Activated B cell treated with CpG ODN at 0.5 μM for 24 hours (primary cell): ENCODE measurements at regions of chr9 and their contacts with region 1.

Region 1: GRCh38 chr9:136807281-136808074 is at the start of gene RABL6:
- DNase-seq: peak; percentile 86
- ATAC-seq: peak; percentile 87
- H3K4me3 Mint-ChIP-seq: peak within 1 kb of the TSS; percentile 88
- H3K27ac Mint-ChIP-seq: peak within 1 kb of the TSS; percentile 87
- H3K4me1 Mint-ChIP-seq: peaks cover 31% of the 10 kb centered on the region
- H3K27me3 Mint-ChIP-seq: no peaks in the 10 kb centered on the region
- CTCF ChIP-seq: no peak
- total RNA-seq, gene RABL6: 70.1 and 75.0 TPM in 2 replicates

Region 2: DNA sequence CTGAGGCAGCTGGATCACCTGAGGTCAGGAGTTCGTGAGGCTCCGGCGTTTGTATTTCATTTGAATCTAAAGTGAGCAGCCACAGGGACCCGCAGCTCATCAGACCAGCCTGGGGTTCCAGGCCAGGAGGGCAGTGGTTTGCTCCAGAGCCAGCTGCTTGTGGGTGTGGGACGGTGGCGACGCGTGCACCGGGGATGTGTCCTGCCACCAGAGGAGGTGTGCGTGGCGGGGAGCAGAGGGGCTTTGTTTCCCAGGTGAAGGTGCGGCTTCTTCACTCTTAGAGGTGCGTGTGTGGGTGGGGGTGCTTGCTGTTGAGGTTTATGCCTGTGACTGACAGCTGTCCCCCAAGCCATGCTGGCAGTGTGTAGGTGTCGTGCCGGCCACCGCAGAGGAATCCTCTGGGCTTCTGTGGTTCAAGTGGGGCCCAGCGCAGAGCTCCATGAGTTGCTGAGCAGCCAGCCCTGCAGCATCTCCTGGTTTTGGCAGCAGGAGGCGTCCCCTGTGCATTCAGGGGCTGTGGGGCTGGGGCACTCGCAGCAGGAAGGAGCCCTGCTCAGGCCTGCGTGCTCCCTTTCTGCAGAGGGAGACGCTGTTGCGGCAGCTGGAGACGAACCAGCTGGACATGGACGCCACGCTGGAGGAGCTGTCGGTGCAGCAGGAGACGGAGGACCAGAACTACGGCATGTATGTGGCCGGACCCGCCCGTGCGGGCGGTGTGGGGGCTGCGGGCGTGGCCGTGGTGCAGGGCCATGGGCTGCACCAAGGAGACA is 27.9 kb after region 1 on chr9:
- CTCF ChIA-PET with region 1: no interaction called
- POLR2A ChIA-PET with region 1: interaction called, 11 read pairs
- intact Hi-C with region 1: no loop called
- DNase-seq: no peak
- ATAC-seq: no peak
- H3K4me3 Mint-ChIP-seq: no peak overlapping the region
- H3K27ac Mint-ChIP-seq: no peak overlapping the region
- H3K4me1 Mint-ChIP-seq: peaks cover 4% of the 10 kb centered on the region
- H3K27me3 Mint-ChIP-seq: no peaks in the 10 kb centered on the region
- CTCF ChIP-seq: no peak